ENCODE measurements at regions of chr10 and their contacts with region 1.

Region 1: DNA sequence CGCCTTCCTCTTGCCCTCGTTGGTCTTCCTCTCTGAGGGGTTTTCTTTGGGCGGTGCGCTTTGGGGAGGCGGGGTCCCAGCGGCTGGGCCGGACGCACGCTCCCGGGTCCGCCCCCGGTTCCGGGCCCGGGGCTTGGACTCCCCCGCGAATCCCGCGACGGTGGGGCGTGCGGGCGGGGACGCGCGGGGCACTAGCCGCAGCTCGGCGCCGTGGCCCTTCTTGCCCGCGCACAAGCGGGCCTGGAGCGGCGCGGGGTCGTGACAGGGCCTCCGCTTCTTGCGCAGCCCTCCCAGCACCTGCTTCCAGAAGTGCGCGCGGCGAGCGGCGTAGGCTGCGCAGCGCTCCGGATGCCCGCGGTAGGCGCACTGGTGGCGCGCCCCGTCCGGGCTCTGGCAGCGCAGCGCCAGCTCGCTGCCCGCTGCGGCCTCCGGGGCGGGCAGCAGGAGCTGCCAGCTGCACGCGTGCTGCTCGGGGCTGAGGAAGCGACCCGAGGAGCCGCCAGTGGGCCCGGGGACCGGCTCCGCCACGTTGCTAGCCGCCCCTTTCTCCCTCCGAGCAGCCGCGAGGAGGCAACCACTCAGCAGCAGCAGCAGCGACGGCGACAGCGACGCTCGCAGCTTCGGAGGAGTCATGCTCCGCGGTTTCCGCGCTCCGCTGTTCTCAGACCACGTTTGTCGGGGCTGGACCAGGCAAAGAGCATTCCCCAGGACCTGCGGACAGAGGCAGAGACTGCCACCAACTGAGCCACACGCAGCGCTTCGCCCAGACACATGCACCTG is 759 bp downstream of the FGFBP3 start:
- DNase-seq: peak; percentile 74
- ATAC-seq: peak; percentile 84
- H3K4me3 Mint-ChIP-seq: peak overlapping the region; percentile 92
- H3K27ac Mint-ChIP-seq: peak overlapping the region; percentile 86
- H3K4me1 Mint-ChIP-seq: peaks cover 19% of the 10 kb centered on the region
- H3K27me3 Mint-ChIP-seq: peaks cover 3% of the 10 kb centered on the region
- CTCF ChIP-seq: no peak

Region 2: GRCh38 chr10:91298224-91298871 is 610.2 kb before region 1 on chr10:
- CTCF ChIA-PET with region 1: interaction called, 13 read pairs
- POLR2A ChIA-PET with region 1: no interaction called
- intact Hi-C with region 1: loop called (anchors 2 kb)
- DNase-seq: peak; percentile 58
- ATAC-seq: peak; percentile 97
- H3K4me3 Mint-ChIP-seq: peak overlapping the region; percentile 70
- H3K27ac Mint-ChIP-seq: no peak overlapping the region
- H3K4me1 Mint-ChIP-seq: peaks cover 9% of the 10 kb centered on the region
- H3K27me3 Mint-ChIP-seq: peaks cover 8% of the 10 kb centered on the region
- CTCF ChIP-seq: peak; percentile 53

Region 3: DNA sequence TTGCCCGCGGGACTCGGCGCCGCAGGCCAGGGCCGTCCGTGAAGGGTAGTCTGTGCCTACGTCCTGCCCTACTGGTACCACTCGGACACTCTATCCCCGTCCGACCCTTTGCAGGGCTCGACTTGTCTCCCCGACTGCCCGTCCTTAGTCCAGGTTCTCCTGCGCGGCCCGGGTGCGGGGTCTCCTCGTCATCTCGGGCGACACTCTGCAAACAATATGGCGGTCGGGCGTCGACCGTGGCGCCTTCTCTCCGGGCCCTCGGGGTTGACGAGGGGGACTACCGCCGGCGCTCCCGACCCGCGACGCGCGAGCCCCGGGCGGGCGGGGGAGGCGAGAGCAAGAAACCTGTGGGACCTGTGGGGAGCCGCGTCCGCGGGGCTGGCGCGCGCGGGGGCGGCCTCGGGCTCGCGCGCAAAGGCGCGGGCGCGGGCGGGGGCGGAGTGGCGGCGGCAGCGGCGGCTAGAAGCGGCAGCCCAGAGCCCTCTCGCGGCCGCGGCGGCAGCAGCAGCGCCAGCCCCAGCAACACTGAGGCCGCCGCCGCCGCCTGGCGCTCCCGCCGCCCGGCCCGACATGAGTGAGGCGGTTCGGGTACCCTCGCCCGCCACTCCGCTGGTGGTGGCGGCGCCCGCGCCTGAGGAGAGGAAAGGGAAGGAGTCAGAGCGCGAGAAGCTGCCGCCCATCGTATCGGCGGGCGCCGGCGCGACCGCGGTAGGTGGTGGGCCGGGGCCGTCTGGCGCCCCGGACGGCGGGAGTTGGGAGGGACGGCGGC is 498.5 kb before region 1 on chr10 and contains the start of gene HECTD2:
- CTCF ChIA-PET with region 1: no interaction called
- POLR2A ChIA-PET with region 1: interaction called, 4 read pairs
- intact Hi-C with region 1: loop called (anchors 1 kb)
- DNase-seq: peak; percentile 84
- ATAC-seq: peak; percentile 82
- H3K4me3 Mint-ChIP-seq: peak within 1 kb of the TSS; percentile 89
- H3K27ac Mint-ChIP-seq: peak within 1 kb of the TSS; percentile 90
- H3K4me1 Mint-ChIP-seq: peaks cover 13% of the 10 kb centered on the region
- H3K27me3 Mint-ChIP-seq: no peaks in the 10 kb centered on the region
- CTCF ChIP-seq: no peak
- total RNA-seq, gene HECTD2: 8.1 and 8.6 TPM in 2 replicates

Region 4: DNA sequence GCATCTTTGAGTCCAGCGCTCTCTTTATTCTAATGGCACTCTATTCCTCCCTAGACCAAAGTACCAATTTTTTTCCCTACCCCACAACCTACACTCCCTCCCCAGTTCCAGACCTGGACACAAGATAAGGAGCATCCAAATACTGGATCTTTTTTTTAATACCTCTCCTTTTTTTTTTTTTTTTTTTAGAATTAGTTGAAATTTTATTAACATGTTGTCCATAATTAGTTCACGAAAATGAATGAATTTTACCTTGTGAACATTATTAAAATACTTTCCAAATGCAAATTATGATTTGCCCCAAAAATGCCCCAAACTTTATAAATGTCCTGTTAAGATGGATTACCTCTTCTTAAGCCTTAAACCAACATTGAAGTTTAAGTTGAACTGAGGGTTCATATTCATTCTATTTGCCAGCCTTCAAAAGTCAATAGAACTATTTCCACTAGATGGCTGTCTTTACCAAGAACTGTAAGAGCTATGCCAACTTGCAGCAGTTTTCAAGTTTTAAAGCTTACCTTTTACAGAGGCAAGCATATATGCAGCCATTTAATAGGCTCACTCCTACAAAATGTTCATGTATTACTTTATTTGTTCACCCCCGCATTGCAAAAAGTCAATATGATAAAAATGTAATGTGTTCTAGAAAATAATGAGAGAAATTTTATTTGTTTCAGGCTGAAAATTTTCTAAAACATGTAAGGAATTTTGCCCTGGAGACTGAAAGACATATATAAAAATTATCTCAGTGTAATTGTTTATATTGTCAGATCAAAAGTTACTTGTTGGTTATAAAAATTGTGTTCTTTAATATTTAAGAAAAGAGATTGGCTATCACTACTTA is 150.0 kb before region 1 on chr10:
- CTCF ChIA-PET with region 1: interaction called, 77 read pairs
- POLR2A ChIA-PET with region 1: interaction called, 5 read pairs
- intact Hi-C with region 1: loop called (anchors 1 kb)
- DNase-seq: no peak
- ATAC-seq: peak; percentile 28
- H3K4me3 Mint-ChIP-seq: no peak overlapping the region
- H3K27ac Mint-ChIP-seq: no peak overlapping the region
- H3K4me1 Mint-ChIP-seq: no peaks in the 10 kb centered on the region
- H3K27me3 Mint-ChIP-seq: peaks cover 15% of the 10 kb centered on the region
- CTCF ChIP-seq: no peak

Region 5: DNA sequence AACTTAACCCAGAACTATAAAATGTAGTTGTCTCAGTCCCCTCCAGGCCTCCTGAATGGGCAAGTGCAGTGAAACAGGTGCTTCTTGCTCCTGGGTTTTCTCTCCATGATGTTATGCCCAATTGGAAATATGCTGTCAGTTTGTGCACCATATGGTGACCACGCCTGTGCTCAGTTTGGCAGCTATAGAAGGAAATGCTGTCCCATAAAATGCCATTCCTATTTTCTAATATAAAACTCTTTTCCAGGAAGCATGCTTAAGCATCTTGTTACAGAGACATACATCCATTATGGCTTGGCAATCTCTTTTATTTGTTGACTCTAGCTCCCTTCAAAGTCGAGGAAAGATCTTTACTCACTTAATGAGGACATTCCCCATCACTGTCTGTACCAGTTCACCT is 44.4 kb before region 1 on chr10:
- CTCF ChIA-PET with region 1: no interaction called
- POLR2A ChIA-PET with region 1: no interaction called
- intact Hi-C with region 1: loop called (anchors 2 kb)
- DNase-seq: no peak
- ATAC-seq: no peak
- H3K4me3 Mint-ChIP-seq: no peak overlapping the region
- H3K27ac Mint-ChIP-seq: no peak overlapping the region
- H3K4me1 Mint-ChIP-seq: no peaks in the 10 kb centered on the region
- H3K27me3 Mint-ChIP-seq: no peaks in the 10 kb centered on the region
- CTCF ChIP-seq: no peak

Region 6: DNA sequence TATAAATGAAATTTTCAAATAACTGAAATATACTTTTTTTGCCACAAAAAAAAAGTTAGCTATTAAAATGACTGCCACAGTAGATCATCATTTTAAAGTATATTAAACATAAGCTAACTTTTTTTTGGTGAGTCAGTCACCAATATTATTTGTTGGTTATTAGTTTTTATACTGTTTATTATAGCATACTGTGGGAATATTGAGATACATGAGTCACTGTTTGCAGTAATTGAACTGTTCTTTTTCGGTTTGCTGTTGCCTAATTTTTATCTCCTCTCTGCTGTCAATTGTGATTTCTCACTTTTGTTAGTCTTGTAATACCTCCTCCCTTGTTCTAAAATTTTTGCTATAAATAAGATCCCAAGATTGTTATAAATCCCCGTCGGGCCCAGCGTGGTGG is 60.8 kb after region 1 on chr10:
- CTCF ChIA-PET with region 1: no interaction called
- POLR2A ChIA-PET with region 1: no interaction called
- intact Hi-C with region 1: no loop called
- DNase-seq: no peak
- ATAC-seq: no peak
- H3K4me3 Mint-ChIP-seq: no peak overlapping the region
- H3K27ac Mint-ChIP-seq: no peak overlapping the region
- H3K4me1 Mint-ChIP-seq: peaks cover 5% of the 10 kb centered on the region
- H3K27me3 Mint-ChIP-seq: no peaks in the 10 kb centered on the region
- CTCF ChIP-seq: no peak

Region 7: GRCh38 chr10:91983416-91983815 is 74.9 kb after region 1 on chr10:
- CTCF ChIA-PET with region 1: no interaction called
- POLR2A ChIA-PET with region 1: no interaction called
- intact Hi-C with region 1: no loop called
- DNase-seq: no peak
- ATAC-seq: no peak
- H3K4me3 Mint-ChIP-seq: no peak overlapping the region
- H3K27ac Mint-ChIP-seq: no peak overlapping the region
- H3K4me1 Mint-ChIP-seq: no peaks in the 10 kb centered on the region
- H3K27me3 Mint-ChIP-seq: no peaks in the 10 kb centered on the region
- CTCF ChIP-seq: no peak